Activated naive CD4-positive, alpha-beta T cell treated with anti-CD3 and anti-CD28 coated beads, Interleukin-2, amount 10 ng/mL, durations not matched to agents 7 days and 5 days (primary cell): ENCODE measurements at regions of chr6 and their contacts with region 1.

Region 1: GRCh38 chr6:169831450-169832246 is 80.2 kb downstream of the ERMARD start:
- DNase-seq: peak; percentile 77
- H3K4me3 Mint-ChIP-seq: no peak overlapping the region
- H3K27ac Mint-ChIP-seq: no peak overlapping the region
- H3K4me1 Mint-ChIP-seq: no peaks in the 10 kb centered on the region
- H3K27me3 Mint-ChIP-seq: peaks cover 40% of the 10 kb centered on the region

Region 2: GRCh38 chr6:169212897-169213813 is 618.5 kb before region 1 on chr6:
- CTCF ChIA-PET with region 1: no interaction called
- DNase-seq: peak; percentile 90
- H3K4me3 Mint-ChIP-seq: peak overlapping the region; percentile 43
- H3K27ac Mint-ChIP-seq: peak overlapping the region; percentile 74
- H3K4me1 Mint-ChIP-seq: peaks cover 21% of the 10 kb centered on the region
- H3K27me3 Mint-ChIP-seq: peaks cover 4% of the 10 kb centered on the region

Region 3: GRCh38 chr6:169800668-169801395 is 30.8 kb before region 1 on chr6:
- CTCF ChIA-PET with region 1: interaction called, 17 read pairs
- DNase-seq: no peak
- H3K4me3 Mint-ChIP-seq: no peak overlapping the region
- H3K27ac Mint-ChIP-seq: no peak overlapping the region
- H3K4me1 Mint-ChIP-seq: peaks cover 28% of the 10 kb centered on the region
- H3K27me3 Mint-ChIP-seq: peaks cover 75% of the 10 kb centered on the region

Region 4: DNA sequence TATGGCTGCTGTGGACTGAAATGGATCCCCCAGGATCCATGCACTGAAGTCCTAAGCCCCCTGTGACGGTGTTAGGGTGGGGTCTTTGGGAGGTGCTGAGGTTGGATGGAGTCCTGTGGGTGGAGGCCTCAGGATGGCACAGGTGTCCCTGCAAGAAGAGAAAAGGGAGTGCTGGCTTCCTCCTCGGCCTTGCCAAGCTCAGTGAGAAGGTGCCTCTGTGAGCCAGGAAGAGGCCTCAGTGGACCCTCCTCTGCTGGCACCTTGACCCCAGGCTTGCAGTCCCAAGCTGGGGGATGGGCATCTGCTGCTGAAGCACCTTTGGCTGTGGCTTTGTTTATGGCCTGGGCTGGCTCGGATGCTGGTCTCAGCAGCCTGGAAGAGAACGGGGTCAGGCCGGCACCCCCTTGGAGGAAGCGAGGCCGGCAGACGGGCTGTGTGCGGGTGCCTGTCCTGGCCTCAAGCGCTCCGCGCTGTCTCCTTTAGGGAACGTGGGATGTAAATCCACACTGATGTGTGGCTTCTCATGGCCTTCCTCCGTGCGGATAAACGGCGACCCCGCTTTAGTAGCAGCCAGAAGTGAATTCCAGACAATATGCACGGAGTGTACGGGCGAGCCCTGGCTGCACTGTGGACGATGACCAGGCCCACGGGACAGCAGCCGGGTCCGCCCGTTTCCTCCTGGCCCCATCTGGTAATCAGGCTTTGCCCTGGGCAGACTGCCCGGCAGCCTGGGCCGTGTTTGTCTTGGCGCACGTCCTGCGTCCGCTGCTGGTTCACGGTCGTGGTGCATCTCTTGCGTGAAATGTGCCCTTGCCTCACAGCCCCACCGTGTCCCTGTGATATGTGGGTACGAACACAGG is 102.4 kb after region 1 on chr6:
- CTCF ChIA-PET with region 1: interaction called, 22 read pairs
- DNase-seq: no peak
- H3K4me3 Mint-ChIP-seq: no peak overlapping the region
- H3K27ac Mint-ChIP-seq: no peak overlapping the region
- H3K4me1 Mint-ChIP-seq: no peaks in the 10 kb centered on the region
- H3K27me3 Mint-ChIP-seq: peaks cover 4% of the 10 kb centered on the region

Region 5: GRCh38 chr6:170516783-170517616 is 685.4 kb after region 1 on chr6:
- CTCF ChIA-PET with region 1: interaction called, 48 read pairs
- DNase-seq: peak; percentile 52
- H3K4me3 Mint-ChIP-seq: peak overlapping the region; percentile 8
- H3K27ac Mint-ChIP-seq: no peak overlapping the region
- H3K4me1 Mint-ChIP-seq: peaks cover 4% of the 10 kb centered on the region
- H3K27me3 Mint-ChIP-seq: peaks cover 28% of the 10 kb centered on the region